Right cardiac atrium (tissue), 5 donors: ENCODE measurements at regions of chr13 and their contacts with region 1.

Region 1: DNA sequence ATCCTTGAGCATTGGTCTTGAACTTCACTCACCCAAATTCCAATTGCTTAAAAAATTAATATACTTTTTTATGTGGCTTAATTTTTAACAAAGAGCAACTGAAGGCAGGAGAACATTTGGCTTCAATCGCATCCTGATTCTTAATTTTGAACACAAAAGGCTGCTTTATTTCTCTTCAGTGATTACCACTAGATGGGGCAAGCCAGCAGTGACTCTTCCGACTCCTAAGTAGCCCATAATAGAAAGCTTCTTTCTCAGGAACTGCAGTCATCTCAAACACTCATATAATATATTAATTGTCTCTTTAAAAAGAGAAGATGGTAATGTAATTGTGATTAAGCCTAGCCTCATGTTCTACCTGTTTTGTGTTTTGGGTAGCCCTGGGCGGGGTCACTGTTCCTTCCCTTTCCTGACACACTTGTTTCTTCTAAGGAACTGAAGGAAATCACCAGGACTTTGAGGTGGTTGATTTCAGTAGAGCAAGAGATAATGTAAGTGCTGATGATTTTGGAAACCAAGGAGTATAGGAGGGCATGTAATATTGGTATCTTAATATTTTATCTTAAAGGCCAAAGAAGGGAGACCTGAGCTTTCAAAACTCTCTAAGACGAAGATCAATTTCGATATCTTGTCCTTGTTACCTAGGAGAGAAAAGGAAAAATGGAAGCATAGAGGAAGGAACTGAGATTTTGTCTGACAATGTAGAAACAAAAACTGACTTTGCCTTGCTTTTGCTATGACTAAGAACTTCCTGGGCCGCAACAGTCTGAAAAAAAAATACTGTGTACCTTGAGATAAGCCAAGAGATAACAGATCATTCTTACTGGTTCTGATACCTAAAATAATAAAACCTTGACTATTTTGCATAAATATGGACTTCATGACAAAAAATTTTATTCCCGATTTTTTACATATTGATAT is 73.1 kb downstream of the TNFSF13B start:
- DNase-seq: no peak
- ATAC-seq: peak; percentile 44 to 56
- H3K4me3 ChIP-seq: no peak overlapping the region
- H3K27ac ChIP-seq: no peak overlapping the region
- H3K4me1 ChIP-seq: no peaks in the 10 kb centered on the region
- H3K27me3 ChIP-seq: no peaks in the 10 kb centered on the region

Region 2: GRCh38 chr13:108463340-108463739 is 120.7 kb after region 1 on chr13:
- intact Hi-C with region 1: no loop called
- DNase-seq: no peak
- ATAC-seq: peak in 1 of 2 donors; percentile 55
- H3K4me3 ChIP-seq: no peak overlapping the region
- H3K27ac ChIP-seq: no peak overlapping the region
- H3K4me1 ChIP-seq: no peaks in the 10 kb centered on the region
- H3K27me3 ChIP-seq: no peaks in the 10 kb centered on the region

Region 3: DNA sequence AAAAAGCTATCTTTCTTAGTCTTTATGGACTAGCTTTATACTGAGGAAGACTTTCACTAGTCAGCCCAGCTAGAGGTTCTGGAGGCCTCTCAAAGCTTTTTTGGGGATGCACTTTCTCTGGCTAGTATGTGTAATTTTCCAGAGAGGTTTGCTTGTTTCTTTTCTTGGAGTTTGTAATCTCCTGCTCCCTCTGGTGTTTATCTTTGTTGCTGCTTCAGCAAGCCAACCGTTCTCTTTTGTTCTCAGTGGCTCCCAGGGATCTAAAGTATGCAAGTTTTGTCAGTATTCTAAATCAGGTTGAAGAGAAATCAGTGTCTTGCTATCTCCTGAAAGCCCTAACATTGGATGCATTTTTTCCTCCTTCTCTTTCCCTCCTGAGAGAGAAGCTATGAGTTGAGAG is 165.6 kb after region 1 on chr13:
- intact Hi-C with region 1: loop called in 1 of 4 experiments (anchors 10 kb)
- DNase-seq: no peak
- ATAC-seq: no peak
- H3K4me3 ChIP-seq: no peak overlapping the region
- H3K27ac ChIP-seq: no peak overlapping the region
- H3K4me1 ChIP-seq: no peaks in the 10 kb centered on the region
- H3K27me3 ChIP-seq: no peaks in the 10 kb centered on the region